BJ (cell line): ENCODE measurements at regions of chr4 and their contacts with region 1.

Region 1: DNA sequence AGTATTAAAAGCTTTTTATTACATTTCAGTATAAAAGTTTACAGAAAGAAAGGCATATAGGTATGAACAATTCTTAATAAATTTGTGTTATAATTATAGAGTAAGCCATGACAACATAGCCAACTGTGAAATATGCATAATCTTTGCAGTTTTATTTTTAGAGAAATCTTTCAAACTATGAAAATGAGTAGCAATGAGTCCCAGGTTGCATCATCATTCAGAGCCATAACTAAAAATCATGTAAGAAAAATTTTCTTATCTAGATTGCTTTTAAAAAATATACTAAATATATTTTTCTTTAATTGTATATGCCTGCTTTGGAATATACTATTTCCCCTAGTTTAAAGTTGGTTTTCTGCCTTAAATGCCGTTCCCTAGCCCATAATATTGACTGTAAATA is 54.8 kb upstream of the NAF1 start:
- DNase-seq: no peak
- H3K4me3 ChIP-seq: no peak overlapping the region
- H3K27me3 ChIP-seq: no peaks in the 10 kb centered on the region
- CTCF ChIP-seq: no peak

Region 2: DNA sequence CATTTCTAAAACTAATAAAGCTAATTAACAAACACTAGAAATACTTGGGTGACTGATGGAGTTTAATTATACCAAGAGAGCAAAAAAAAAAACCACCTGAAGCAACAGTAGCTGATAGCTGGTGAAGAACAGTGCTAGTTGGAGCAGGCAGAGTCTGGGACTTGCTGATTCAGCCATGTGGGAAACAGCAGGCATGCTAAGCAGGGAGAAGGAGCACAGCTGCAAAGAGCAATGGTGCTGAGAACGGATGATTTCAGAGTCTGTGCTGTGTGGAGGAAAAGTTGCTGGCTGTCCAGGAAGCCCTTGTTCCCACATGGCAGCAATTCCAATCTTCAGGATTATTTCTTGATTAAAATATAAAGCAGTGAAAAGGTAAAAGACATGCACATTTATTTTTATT is 42.1 kb after region 1 on chr4:
- CTCF ChIA-PET with region 1: no interaction called
- POLR2A ChIA-PET with region 1: interaction called, 20 read pairs
- DNase-seq: no peak
- H3K4me3 ChIP-seq: no peak overlapping the region
- H3K27me3 ChIP-seq: no peaks in the 10 kb centered on the region
- CTCF ChIP-seq: no peak